Heart left ventricle (tissue), 16 donors: ENCODE measurements at regions of chr4 and their contacts with region 1.

Region 1: DNA sequence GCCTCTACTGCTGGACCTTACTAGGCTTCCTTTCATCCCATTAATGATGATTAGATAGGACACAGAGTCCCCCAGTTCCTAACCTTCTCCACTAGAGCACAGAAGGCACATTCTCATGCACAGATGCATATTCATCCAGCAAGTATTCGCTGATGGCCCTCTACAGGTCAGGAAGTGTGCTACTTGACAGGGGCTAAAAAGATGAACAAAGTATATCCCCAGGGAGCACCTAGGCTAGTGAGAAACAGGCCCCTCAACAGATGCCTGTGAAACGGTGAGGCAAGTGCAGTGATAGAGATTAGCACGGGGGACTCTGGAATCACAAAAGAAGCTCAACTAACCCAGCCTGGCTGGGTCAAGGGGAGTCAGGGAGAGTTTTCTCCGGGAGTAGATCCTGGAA is 95.8 kb downstream of the MGST2 start:
- DNase-seq: no peak
- ATAC-seq: peak in 3 of 4 donors; percentile 7 to 14 (median 13)
- H3K4me3 ChIP-seq: no peak overlapping the region
- H3K27ac ChIP-seq: peak overlapping the region in 10 of 12 donors; percentile 12 to 96 (median 90)
- H3K4me1 ChIP-seq: peaks cover 13 to 64% (median 47%) of the 10 kb centered on the region in 12 donors
- H3K27me3 ChIP-seq: no peaks in the 10 kb centered on the region
- CTCF ChIP-seq: peak in 9 of 12 donors; percentile 9 to 53 (median 33)
- POLR2A ChIP-seq: no peak

Region 2: GRCh38 chr4:139740531-139741041 is 20.9 kb before region 1 on chr4:
- intact Hi-C with region 1: loop called in 4 of 10 experiments (anchors 2 kb)
- DNase-seq: peak; percentile 77 to 83 (median 82)
- ATAC-seq: peak; percentile 88 to 97 (median 96)
- H3K4me3 ChIP-seq: peak overlapping the region in 8 of 12 donors; percentile 12 to 23 (median 14)
- H3K27ac ChIP-seq: peak overlapping the region; percentile 26 to 91 (median 84)
- H3K4me1 ChIP-seq: peaks cover 0 to 62% (median 33%) of the 10 kb centered on the region in 12 donors
- H3K27me3 ChIP-seq: no peaks in the 10 kb centered on the region
- CTCF ChIP-seq: peak in 6 of 12 donors; percentile 12 to 56 (median 23)
- POLR2A ChIP-seq: peak in 1 of 2 donors; percentile 15

Region 3: GRCh38 chr4:139815778-139816601 is 54.5 kb after region 1 on chr4:
- intact Hi-C with region 1: loop called in 3 of 10 experiments (anchors 2 to 5 kb)
- DNase-seq: peak in 4 of 5 donors; percentile 53 to 70 (median 56)
- ATAC-seq: peak; percentile 79 to 93 (median 90)
- H3K4me3 ChIP-seq: peak overlapping the region in 11 of 12 donors; percentile 5 to 63 (median 50)
- H3K27ac ChIP-seq: peak overlapping the region; percentile 12 to 88 (median 78)
- H3K4me1 ChIP-seq: peaks cover 0 to 45% (median 32%) of the 10 kb centered on the region in 12 donors
- H3K27me3 ChIP-seq: no peaks in the 10 kb centered on the region
- CTCF ChIP-seq: no peak
- POLR2A ChIP-seq: peak in 1 of 2 donors; percentile 17

Region 4: DNA sequence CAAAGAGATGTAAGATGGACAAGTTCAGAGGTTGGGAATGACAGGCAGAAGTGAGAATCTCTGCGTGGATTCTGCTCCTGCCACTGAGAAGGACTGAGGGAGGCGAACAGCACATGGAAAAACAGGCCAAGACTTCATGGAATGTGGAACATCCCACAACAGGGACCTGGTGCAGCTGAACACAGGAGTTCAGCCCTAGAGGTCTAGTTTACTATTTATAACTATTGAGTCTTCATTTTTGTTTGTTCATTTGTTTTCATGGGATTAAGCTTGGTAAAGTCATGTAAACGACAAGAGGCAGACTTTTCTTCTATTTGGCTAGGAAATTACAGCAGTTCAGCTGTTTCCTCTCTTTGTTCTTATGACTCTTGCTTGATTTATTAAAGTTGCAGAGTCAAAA is 158.1 kb after region 1 on chr4:
- intact Hi-C with region 1: loop called in 2 of 10 experiments (anchors 5 to 10 kb)
- DNase-seq: peak in 3 of 5 donors; percentile 29 to 43 (median 33)
- ATAC-seq: peak; percentile 62 to 82 (median 69)
- H3K4me3 ChIP-seq: peak overlapping the region in 1 of 12 donors; percentile 1
- H3K27ac ChIP-seq: peak overlapping the region; percentile 19 to 86 (median 80)
- H3K4me1 ChIP-seq: peaks cover 11 to 90% (median 64%) of the 10 kb centered on the region in 12 donors
- H3K27me3 ChIP-seq: no peaks in the 10 kb centered on the region
- CTCF ChIP-seq: no peak
- POLR2A ChIP-seq: no peak